Calu3 (cell line): ENCODE measurements at regions of chr14 and their contacts with region 1.

Region 1: GRCh38 chr14:105473677-105474482 is 741 bp upstream of the CRIP2 start:
- DNase-seq: peak; percentile 94
- H3K4me3 Mint-ChIP-seq: peak overlapping the region; percentile 72
- H3K27ac Mint-ChIP-seq: peak overlapping the region; percentile 61
- H3K4me1 Mint-ChIP-seq: peaks cover 17% of the 10 kb centered on the region
- H3K27me3 Mint-ChIP-seq: no peaks in the 10 kb centered on the region
- CTCF ChIP-seq: no peak

Region 2: DNA sequence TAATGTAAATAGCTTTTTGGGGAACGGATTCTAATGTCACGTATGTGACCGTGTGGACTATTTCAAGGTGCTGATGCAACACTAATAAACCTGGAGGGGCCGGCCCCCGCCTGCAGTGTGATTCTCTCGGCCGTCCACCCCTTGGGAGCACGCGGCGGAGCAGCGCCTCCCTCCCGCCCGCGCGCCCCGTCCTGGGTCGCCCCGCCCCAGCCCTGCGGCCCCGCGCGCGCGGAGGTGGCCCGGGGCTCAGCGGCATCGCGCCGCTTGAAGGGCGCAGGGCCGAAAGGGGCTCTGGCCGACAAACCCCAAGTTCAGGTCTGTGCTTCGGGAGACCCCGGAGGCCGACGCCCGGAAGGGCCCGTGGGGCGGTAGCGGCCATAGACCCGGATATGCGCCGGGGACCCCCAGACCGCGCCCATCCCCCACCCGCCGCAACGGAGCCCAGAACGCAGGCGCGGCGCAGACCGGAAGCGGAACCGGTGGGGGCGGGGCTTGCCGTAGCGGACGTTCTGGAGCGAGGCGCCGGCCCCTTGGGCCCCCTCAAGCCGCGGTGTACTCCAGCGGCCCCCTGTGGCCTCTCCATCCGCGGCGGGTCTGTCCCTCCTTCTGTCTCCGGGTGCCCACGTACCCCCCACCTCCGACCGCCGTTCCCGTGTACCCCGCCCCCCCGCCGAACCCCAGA is 75.7 kb before region 1 on chr14 and contains the start of gene TEX22:
- CTCF ChIA-PET with region 1: no interaction called
- intact Hi-C with region 1: loop called (anchors 2 kb)
- DNase-seq: peak; percentile 92
- H3K4me3 Mint-ChIP-seq: peak within 1 kb of the TSS; percentile 74
- H3K27ac Mint-ChIP-seq: peak within 1 kb of the TSS; percentile 52
- H3K4me1 Mint-ChIP-seq: no peaks in the 10 kb centered on the region
- H3K27me3 Mint-ChIP-seq: no peaks in the 10 kb centered on the region
- CTCF ChIP-seq: no peak
- total RNA-seq, gene TEX22: 1.6 and 2.8 TPM in 2 replicates

Region 3: DNA sequence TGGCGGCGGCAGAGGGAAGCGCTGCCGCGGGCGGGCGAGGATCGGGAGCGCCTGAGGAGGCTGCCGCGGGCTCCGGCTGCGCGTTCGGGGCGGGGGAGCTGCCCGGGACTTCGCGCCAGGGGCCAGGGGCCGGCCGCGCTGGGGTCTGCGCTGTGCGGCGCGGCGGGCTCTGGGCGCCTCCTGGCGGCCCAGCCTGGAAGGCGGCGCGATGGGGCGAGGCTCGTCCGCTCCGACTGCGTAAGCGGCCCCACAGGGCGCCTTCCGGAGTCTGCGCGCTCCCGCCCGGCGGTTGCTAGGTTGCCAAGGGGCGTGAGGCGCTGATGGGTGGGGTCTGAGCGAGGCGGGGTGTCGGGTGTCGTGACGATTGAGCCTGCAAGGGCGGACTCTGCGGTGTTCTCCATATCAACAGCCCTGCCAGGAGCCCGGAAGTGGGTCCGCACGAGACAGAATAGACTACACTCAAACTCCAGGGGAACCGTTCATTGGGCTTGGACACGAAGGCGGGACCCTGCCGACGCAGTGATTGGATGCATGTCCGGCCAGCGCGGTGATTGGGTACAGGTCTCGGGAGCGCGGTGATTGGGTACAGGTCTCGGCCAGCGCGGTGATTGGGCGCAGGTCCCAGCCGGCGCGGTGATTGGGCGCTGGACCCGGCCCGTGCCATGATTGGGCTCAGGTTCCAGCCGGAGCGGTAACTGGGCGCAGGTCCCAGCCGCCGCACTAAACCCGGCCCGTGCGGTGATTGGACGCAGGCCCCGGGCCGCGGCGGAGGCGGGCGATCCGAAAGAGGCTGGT is 16.9 kb after region 1 on chr14 and contains the start of gene TEDC1:
- CTCF ChIA-PET with region 1: interaction called, 13 read pairs
- intact Hi-C with region 1: no loop called
- DNase-seq: peak; percentile 99
- H3K4me3 Mint-ChIP-seq: peak within 1 kb of the TSS; percentile 80
- H3K27ac Mint-ChIP-seq: peak within 1 kb of the TSS; percentile 91
- H3K4me1 Mint-ChIP-seq: peaks cover 9% of the 10 kb centered on the region
- H3K27me3 Mint-ChIP-seq: no peaks in the 10 kb centered on the region
- CTCF ChIP-seq: peak; percentile 74
- total RNA-seq, gene TEDC1: 33.7 and 36.8 TPM in 2 replicates